ENCODE measurements at regions of chr19 and their contacts with region 1.

Region 1: DNA sequence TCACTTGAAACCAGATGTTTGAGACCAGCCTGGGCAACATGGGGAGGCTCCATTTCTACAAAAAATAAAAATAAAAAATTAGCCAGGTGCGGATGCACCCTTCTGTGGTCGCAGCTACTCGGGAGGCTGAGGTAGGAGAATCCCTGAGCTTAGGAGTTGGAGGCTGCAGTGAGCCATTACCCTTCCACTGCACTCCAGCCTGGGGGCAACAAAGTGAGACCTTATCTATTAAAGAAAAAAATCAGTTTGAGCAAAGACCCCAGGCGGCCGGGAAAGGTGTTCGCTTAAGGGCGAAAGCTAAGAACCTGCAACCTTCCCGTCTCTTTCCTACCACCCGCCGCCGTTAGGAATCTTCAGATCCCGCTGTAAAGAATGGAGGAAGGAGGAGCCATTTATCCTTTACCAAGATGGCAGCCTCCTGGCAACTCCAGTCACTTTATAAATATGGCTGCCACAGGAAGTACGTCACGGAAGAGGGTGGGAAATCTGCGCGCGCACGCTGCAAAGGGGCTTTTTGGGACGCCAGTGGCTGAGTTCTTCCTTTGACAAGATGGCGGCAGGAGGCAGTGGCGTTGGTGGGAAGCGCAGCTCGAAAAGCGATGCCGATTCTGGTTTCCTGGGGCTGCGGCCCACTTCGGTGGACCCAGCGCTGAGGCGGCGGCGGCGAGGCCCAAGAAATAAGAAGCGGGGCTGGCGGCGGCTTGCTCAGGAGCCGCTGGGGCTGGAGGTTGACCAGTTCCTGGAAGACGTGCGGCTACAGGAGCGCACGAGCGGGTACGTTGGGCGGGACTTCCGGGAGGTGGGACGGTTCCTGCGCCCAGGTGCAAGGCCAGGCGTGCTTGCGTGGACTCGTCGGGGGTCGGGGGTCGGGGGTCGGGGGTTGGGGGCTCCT is at the start of gene NOP53:
- H3K4me3 ChIP-seq: peak within 1 kb of the TSS; percentile 88
- H3K27ac ChIP-seq: peak within 1 kb of the TSS; percentile 86
- H3K4me1 ChIP-seq: peaks cover 7% of the 10 kb centered on the region; the same call in 1 of the 2 replicates
- CTCF ChIP-seq: peak; percentile 39; the same call in 1 of the 2 replicates

Region 2: DNA sequence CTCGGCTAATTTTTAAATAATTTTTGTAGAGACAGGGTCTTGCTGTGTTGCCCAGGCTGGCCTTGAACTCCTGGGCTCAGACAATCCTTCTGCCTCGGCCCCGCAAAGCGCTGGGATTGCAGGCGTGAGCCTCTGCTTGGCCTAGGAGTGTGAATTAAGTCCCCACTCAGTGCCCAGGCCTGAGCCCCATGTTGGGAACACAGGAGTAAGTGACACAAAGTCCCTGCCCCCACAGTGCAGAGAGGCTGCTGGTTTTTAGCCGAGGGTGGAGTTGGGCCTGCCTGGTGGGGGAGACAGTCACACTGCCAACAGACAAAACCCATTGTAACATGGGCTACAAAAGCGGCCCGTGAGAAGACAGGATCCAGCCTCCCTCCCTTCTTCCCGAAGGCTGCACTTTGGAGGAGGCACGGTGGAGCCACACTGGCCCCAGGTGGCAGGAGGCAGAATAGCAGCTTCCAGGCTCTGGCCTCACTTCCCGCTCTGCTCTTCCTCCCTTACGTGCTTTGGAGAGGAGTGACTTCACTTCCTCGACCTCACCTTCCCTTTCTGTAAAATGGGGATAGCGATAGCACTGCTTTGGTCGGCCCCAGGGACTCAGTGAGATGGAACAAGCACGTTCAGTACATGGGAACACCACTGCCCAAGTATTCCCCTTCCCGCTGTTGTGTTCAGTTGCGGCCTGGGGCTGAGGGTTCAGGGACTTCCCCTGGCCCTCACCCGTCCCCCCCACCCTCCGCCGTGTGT is 47.2 kb before region 1 on chr19:
- CTCF ChIA-PET with region 1: interaction called, 36 read pairs
- POLR2A ChIA-PET with region 1: interaction called, 3 read pairs
- H3K4me3 ChIP-seq: no peak overlapping the region
- H3K27ac ChIP-seq: 0 out of 2 replicates have a peak overlapping the region, but pooled peaks have one; percentile 52
- H3K4me1 ChIP-seq: no peaks in the 10 kb centered on the region
- CTCF ChIP-seq: peak; percentile 97

Region 3: DNA sequence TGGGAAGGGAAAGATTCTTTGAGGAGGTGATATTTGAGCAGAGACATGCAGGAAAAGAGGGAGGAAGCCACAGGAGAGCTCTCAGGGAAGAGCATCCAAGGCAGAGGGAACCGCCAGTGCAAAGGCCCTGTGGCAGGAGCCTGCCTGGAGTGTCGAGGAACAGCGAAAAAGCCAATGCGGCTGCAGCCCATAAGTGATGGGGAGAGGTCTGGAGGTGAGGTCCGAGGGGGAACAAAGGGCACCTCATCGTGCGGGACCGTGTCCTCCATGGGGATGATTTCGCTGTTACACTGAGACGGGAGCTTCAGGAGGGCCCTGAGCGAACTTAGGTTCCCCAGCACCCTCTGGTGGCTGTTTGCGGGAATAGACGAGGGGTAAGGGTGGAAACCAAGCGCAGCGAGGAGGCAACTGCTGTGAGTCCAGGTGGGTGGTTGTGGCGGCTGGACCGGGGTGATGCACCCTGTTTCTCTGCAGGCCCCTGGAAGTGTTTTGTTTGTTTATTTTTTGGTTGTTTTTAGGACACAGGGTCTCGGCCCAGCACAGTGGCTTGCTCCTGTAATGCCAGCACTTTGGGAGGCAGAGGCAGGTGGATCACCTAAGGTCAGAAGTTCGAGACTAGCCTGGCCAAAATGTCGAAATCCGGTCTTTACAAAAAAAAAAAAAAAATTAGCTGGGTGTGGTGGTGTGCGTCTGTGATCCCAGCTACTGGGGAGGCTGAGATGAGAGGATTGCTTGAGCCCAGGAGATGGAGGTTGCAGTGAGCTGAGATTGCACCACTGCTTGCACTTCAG is 37.9 kb before region 1 on chr19:
- CTCF ChIA-PET with region 1: interaction called, 73 read pairs
- POLR2A ChIA-PET with region 1: interaction called, 4 read pairs
- H3K4me3 ChIP-seq: no peak overlapping the region
- H3K27ac ChIP-seq: no peak overlapping the region
- H3K4me1 ChIP-seq: no peaks in the 10 kb centered on the region
- CTCF ChIP-seq: peak; percentile 84

Region 4: DNA sequence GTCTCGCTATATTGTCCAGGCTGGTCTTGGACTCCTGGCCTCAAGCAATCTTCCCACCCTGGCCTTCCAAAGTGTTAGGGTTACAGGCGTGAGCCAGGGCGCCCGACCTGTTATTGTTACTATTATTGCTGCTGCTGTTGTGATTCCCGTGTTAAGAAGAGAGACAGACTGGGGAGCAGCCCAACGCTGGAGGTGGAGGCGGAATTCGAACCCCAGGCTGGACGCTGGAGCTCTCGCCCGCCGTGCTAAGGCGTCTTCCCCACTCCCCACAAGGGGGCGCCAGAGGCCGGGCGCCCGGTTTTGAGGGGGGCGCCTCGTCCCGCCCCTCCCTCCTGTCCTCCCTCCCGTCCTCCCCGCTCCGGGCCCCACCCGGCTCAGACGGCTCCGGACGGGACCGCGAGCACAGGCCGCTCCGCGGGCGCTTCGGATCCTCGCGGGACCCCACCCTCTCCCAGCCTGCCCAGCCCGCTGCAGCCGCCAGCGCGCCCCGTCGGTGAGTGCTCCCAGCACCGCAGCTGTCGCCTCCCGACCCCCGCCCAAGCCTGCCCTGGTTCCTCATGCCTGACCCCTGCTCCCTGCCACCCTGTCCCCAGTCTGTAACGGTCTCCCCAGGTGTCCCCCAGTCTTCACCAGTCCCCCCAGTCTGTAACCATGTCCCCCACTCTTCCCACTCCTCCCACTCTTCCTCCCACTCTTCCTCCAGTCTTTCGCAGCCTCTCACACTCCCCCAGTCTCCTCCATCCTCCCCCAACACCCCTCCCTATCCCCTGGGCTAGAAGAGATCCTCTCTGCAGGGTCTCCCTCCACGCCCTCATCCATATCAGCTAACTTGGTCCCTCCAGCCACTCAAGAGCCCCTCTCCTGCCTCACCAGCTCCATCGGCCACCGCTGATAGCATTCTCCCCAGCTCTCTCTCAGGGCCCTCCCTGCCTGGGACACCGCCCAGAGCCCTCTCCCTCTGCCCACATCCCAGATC is 31.9 kb before region 1 on chr19 and contains the start of gene EHD2:
- CTCF ChIA-PET with region 1: interaction called, 73 read pairs
- POLR2A ChIA-PET with region 1: interaction called, 9 read pairs
- H3K4me3 ChIP-seq: peak within 1 kb of the TSS; percentile 13
- H3K27ac ChIP-seq: no peak within 1 kb of the TSS
- H3K4me1 ChIP-seq: no peaks in the 10 kb centered on the region
- CTCF ChIP-seq: no peak

Region 5: DNA sequence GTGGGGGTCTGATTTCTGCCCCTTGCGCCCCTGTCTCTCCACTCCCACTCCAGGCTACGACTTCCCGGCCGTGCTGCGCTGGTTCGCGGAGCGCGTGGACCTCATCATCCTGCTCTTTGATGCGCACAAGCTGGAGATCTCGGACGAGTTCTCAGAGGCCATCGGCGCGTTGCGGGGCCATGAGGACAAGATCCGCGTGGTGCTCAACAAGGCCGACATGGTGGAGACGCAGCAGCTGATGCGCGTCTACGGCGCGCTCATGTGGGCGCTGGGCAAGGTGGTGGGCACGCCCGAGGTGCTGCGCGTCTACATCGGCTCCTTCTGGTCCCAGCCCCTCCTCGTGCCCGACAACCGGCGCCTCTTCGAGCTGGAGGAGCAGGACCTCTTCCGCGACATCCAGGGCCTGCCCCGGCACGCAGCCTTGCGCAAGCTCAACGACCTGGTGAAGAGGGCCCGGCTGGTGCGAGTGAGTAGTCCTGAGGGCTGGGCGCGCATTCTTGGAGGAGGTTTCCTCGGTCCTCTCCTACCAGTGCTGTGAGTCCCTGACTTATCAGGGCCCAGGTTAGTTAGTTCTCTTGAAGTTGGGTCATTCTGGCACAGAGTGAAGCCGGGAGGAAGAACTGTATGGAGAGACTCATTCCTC is 19.4 kb before region 1 on chr19:
- CTCF ChIA-PET with region 1: interaction called, 12 read pairs
- POLR2A ChIA-PET with region 1: interaction called, 5 read pairs
- H3K4me3 ChIP-seq: no peak overlapping the region
- H3K27ac ChIP-seq: no peak overlapping the region
- H3K4me1 ChIP-seq: peaks cover 6% of the 10 kb centered on the region
- CTCF ChIP-seq: no peak

Region 6: GRCh38 chr19:47765523-47766358 is 20.5 kb after region 1 on chr19:
- CTCF ChIA-PET with region 1: interaction called, 14 read pairs
- POLR2A ChIA-PET with region 1: interaction called, 4 read pairs
- H3K4me3 ChIP-seq: no peak overlapping the region
- H3K27ac ChIP-seq: no peak overlapping the region
- H3K4me1 ChIP-seq: no peaks in the 10 kb centered on the region
- CTCF ChIP-seq: peak; percentile 76

Region 7: GRCh38 chr19:47790398-47790814 is 45.1 kb after region 1 on chr19:
- CTCF ChIA-PET with region 1: interaction called, 11 read pairs
- POLR2A ChIA-PET with region 1: no interaction called
- H3K4me3 ChIP-seq: no peak overlapping the region
- H3K27ac ChIP-seq: no peak overlapping the region
- H3K4me1 ChIP-seq: no peaks in the 10 kb centered on the region
- CTCF ChIP-seq: peak; percentile 85

Measured in HEK293 (cell line).